OCI-LY7 (cell line): ENCODE measurements at regions of chr17 and their contacts with region 1.

Region 1: DNA sequence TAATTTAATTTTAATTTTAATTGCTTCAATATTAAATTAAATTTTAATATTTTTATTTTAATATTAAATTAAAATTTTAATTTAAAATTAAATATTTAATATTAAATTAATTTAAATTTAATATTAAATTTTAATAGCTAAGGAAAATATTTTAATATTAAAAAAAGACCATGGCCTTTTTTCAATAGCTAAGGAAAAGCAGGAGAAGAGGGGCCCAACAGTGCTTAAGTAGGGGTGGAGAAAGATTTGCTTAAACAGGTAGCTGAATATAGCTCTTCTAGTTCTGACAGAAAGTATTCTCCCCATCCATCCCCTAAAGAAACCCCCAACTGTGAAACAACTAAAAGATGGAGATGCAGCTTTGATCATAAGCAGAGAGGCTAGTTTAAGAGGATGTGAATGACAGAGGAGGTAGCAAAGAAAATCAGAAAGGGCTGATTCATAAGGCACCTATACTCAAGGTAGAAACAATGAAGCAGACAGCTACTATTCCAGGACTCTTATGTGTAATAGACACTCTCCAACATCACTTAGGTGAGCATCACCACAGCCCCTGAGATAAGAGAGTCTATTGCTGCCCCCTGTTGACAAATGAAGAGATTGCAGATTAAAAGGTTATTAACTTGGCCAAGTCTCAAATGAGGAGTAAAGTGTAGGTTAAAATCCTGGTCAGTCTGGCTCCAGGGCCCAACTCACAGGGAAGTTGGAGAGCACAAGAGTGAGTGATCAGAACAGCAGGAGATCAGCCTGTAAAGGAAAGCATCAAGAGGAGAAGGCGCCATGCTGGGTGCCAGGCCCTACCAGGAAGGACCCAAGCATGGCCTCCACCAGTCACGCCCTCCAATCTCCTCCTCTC is 7.8 kb upstream of the RNASEK start:
- DNase-seq: peak; percentile 80
- H3K4me3 ChIP-seq: no peak overlapping the region
- H3K27ac ChIP-seq: no peak overlapping the region
- H3K4me1 ChIP-seq: no peaks in the 10 kb centered on the region
- CTCF ChIP-seq: peak; percentile 91

Region 2: GRCh38 chr17:6843241-6843880 is 161.3 kb before region 1 on chr17:
- CTCF ChIA-PET with region 1: interaction called, 10 read pairs
- POLR2A ChIA-PET with region 1: interaction called, 3 read pairs
- intact Hi-C with region 1: loop called (anchors 1 kb)
- DNase-seq: peak; percentile 74
- H3K4me3 ChIP-seq: no peak overlapping the region
- H3K27ac ChIP-seq: no peak overlapping the region
- H3K4me1 ChIP-seq: no peaks in the 10 kb centered on the region
- CTCF ChIP-seq: peak; percentile 88

Region 3: DNA sequence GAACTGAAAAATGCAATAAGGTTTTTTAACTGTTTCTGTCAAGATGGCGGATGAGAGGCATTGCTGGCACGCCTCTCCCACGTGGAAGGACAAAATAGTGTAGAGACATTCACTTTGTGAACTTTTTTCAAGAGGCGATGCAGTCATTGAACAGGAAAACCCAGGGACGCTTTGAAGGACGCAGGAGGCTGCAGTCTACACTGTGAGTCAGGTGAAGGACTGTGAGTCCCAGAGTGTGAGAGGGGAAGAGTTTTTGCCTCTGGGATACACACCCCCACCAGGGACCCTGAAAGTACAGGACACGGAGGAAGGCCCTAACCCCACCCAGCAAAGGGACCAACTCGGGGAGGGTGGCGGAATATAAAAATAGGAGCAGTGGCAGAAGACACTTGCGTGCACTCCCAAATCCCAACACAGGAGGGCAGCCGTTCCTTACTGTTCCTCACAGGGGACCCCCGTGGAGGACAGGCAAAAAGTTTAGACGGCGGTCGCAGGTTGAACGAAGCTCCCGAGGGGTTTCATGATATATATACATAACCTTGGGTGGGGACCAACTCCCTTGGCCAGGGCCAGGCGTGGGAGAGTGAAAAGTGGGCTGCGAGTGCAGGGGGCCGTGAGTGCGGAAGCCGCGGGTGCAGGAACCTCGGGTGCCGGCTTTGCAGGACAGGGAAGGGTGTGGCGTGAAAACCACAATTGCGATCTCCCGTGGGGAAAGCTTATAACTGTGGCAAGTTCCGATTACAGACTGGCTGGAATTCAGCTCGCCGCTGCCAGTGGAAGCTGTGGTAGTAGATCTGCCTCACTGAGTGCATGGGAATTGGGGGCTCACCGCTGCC is 90.8 kb before region 1 on chr17:
- CTCF ChIA-PET with region 1: interaction called, 8 read pairs
- POLR2A ChIA-PET with region 1: no interaction called
- intact Hi-C with region 1: loop called (anchors 2 kb)
- DNase-seq: peak; percentile 67
- H3K4me3 ChIP-seq: no peak overlapping the region
- H3K27ac ChIP-seq: no peak overlapping the region
- H3K4me1 ChIP-seq: no peaks in the 10 kb centered on the region
- CTCF ChIP-seq: peak; percentile 82